HEK293 (cell line): ENCODE measurements at regions of chr2 and their contacts with region 1.

Region 1: DNA sequence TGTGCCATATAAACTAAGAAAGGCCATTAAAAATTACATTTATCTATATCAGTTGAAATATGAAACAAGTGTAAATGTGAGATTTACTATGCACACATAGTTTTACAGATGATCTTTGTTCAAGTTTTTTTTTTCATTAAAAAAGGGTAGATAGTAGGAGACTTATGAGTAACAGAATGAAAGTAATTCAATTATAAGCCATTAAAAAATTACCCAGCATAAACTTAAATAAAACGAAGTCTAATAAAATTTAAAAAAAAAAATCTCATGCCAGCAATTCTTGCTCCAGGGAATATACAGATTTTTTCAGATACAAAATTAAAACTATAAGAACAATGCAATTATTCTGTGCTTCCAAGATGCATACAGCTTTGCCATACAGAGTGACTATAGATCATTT is 118.3 kb upstream of the RNU4ATAC start:
- H3K4me3 ChIP-seq: no peak overlapping the region
- H3K27ac ChIP-seq: no peak overlapping the region
- H3K4me1 ChIP-seq: no peaks in the 10 kb centered on the region
- CTCF ChIP-seq: no peak

Region 2: DNA sequence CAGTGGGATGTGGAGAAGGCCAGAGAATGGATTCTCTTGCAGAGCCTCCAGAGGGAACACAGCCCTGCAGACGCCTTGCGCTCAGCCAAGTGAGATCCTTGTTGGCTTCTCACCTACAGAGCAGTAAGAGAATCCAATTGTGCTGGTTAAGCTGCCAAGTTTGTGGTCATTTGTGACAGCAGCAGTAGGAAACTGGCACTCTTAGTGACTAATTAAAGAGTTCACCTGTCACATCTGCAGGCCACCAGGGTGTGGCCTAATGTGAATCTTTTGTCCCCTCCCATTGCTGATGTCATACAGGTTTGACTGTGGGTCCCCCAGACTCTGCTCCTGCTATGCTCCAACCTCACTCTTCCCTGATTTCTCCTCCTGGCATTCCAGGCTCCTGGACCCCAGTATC is 363.2 kb before region 1 on chr2:
- CTCF ChIA-PET with region 1: no interaction called
- POLR2A ChIA-PET with region 1: no interaction called
- H3K4me3 ChIP-seq: no peak overlapping the region
- H3K27ac ChIP-seq: no peak overlapping the region
- H3K4me1 ChIP-seq: no peaks in the 10 kb centered on the region
- CTCF ChIP-seq: no peak

Region 3: DNA sequence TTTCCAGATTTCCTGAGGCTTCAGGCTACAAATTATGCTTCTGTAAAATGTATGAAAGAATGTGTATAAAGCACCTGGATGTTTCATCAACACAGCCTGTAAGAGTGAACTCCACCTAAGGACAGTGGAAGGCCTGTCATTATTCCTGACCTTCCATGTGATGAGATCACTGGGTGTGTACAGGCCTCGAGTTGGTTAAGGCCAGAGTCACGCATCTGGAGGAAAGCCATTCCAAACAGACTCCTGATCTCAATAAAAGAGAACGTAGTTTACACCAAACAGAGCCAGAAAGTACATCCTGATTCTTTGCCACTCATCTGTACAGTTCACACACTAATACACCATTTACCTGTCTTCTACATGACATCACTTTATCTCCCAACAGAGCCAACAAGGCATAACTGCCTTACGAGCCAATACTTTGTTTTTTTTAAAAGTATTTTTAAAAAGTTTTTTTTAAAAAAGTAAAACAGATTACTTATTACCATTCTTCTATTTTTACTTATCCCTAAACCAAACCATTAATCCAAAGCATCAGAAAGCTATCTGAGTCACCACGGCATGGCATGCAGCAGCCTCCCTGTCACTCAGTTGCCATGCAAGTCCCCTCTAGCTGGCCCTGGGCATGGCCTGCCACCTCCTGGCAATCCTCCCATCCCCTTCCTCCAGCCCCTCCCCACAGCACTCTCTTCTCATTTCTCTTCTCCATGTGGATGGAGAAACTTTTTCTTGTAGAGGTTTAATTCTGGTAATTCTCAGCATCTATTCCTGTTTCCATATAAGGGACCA is 48.5 kb before region 1 on chr2:
- CTCF ChIA-PET with region 1: no interaction called
- POLR2A ChIA-PET with region 1: no interaction called
- H3K4me3 ChIP-seq: no peak overlapping the region
- H3K27ac ChIP-seq: no peak overlapping the region
- H3K4me1 ChIP-seq: no peaks in the 10 kb centered on the region
- CTCF ChIP-seq: no peak

Region 4: DNA sequence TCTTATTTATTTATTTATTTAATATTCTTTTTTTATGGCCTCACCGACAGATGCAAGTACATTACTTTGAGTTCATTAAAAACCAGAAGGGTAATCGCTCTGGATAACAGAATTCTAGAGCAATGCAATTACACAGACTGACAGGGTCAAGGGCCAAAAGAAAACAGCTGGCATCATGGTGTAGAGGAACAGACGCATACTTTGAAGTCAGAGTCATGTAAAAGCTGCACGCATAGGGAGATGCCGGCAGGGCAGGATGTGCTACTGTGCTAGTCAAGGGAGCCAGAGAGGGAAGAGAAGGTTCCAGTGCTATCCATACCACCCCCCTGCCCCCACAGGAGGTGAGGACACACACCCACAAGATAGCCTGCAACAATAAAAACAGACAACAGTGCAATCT is 12.1 kb before region 1 on chr2:
- CTCF ChIA-PET with region 1: interaction called, 25 read pairs
- POLR2A ChIA-PET with region 1: no interaction called
- H3K4me3 ChIP-seq: no peak overlapping the region
- H3K27ac ChIP-seq: no peak overlapping the region
- H3K4me1 ChIP-seq: no peaks in the 10 kb centered on the region
- CTCF ChIP-seq: no peak